ENCODE measurements at regions of chr14 and their contacts with region 1.

Region 1: GRCh38 chr14:49852301-49853157 is at the start of gene NEMF:
- DNase-seq: peak; percentile 91
- ATAC-seq: peak; percentile 84
- H3K4me3 Mint-ChIP-seq: peak within 1 kb of the TSS; percentile 97
- H3K27ac Mint-ChIP-seq: peak within 1 kb of the TSS; percentile 98
- H3K4me1 Mint-ChIP-seq: peaks cover 41% of the 10 kb centered on the region
- H3K27me3 Mint-ChIP-seq: no peaks in the 10 kb centered on the region
- total RNA-seq, gene NEMF: 75.6 to 78.9 TPM

Region 2: DNA sequence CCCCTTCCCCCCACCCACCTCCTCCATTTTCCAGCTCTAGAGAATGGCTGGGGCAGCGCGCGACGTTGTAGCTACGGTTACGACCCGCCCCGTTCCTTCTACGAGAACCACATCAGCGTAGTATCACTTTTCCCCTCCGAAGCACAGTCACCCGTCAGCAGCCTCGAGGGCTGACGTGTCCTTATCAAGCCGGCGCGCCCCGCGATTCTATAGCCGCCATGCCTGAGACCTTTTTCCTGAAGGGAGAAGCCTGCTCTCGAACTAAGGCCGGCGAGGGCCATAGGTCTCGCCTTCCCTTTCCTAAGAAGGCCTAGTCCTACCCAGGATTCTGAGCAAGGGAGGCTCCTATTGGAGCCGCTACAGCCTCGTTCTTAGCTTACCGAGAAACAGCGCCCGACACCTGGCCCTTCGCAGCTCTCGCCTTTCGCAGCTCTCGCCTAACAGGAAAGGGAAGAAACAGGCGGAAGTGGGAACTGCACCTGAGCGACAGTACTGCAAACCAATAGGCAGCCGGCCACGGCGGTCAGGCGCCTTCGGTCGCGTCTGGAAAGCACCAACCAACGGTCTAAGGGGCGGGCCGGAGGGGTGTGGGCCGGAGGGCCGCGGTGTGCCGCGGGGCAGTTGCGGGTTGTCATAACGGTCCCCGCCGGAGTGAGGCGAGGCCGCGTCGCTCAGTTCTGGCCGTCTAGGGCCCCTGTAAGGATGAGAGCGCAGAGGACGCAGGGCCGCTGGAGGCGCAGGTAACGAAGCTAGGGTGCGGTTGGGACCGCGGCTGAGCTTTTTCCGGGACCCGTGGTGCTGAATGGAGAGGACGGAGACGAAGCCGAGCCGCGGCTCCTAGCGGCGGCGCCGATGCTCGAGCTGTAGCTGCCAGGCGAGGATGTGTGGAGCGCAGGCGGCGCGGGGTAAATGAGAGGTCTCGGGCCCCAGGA is 232.1 kb before region 1 on chr14 and contains the starts of genes MGAT2 and RPL36AL:
- CTCF ChIA-PET with region 1: interaction called, 15 read pairs
- POLR2A ChIA-PET with region 1: interaction called, 8 read pairs
- DNase-seq: peak; percentile 97
- ATAC-seq: peak; percentile 91
- H3K4me3 Mint-ChIP-seq: peak within 1 kb of the TSS; percentile 93
- H3K27ac Mint-ChIP-seq: peak within 1 kb of the TSS; percentile 96
- H3K4me1 Mint-ChIP-seq: peaks cover 58% of the 10 kb centered on the region
- H3K27me3 Mint-ChIP-seq: no peaks in the 10 kb centered on the region
- total RNA-seq, gene MGAT2: 55.1 to 57.4 TPM
- total RNA-seq, gene RPL36AL: 229 to 241 TPM

Region 3: GRCh38 chr14:49767562-49768300 is 84.8 kb before region 1 on chr14 and contains the start of gene KLHDC2:
- CTCF ChIA-PET with region 1: interaction called, 12 read pairs
- POLR2A ChIA-PET with region 1: interaction called, 10 read pairs
- DNase-seq: peak; percentile 92
- ATAC-seq: peak; percentile 88
- H3K4me3 Mint-ChIP-seq: peak within 1 kb of the TSS; percentile 98
- H3K27ac Mint-ChIP-seq: peak within 1 kb of the TSS; percentile 99
- H3K4me1 Mint-ChIP-seq: peaks cover 26% of the 10 kb centered on the region
- H3K27me3 Mint-ChIP-seq: no peaks in the 10 kb centered on the region
- total RNA-seq, gene KLHDC2: 24.9 to 25.5 TPM

Region 4: GRCh38 chr14:49867831-49868723 is 15.5 kb after region 1 on chr14:
- CTCF ChIA-PET with region 1: interaction called, 227 read pairs
- POLR2A ChIA-PET with region 1: interaction called, 102 read pairs
- DNase-seq: peak; percentile 99
- ATAC-seq: peak; percentile 91
- H3K4me3 Mint-ChIP-seq: peak overlapping the region; percentile 91
- H3K27ac Mint-ChIP-seq: peak overlapping the region; percentile 96
- H3K4me1 Mint-ChIP-seq: peaks cover 21% of the 10 kb centered on the region
- H3K27me3 Mint-ChIP-seq: no peaks in the 10 kb centered on the region

Region 5: GRCh38 chr14:50109342-50109741 is 256.8 kb after region 1 on chr14:
- CTCF ChIA-PET with region 1: interaction called, 64 read pairs
- POLR2A ChIA-PET with region 1: interaction called, 3 read pairs
- DNase-seq: no peak
- ATAC-seq: no peak
- H3K4me3 Mint-ChIP-seq: no peak overlapping the region
- H3K27ac Mint-ChIP-seq: no peak overlapping the region
- H3K4me1 Mint-ChIP-seq: peaks cover 31% of the 10 kb centered on the region
- H3K27me3 Mint-ChIP-seq: no peaks in the 10 kb centered on the region

Measured in activated CD8-positive, alpha-beta T cell treated with anti-CD3 and anti-CD28 coated beads, Interleukin-2, amount 10 ng/mL, durations not matched to agents 7 days and 5 days (primary cell).